ENCODE measurements at regions of chr5 and their contacts with region 1.

Region 1: DNA sequence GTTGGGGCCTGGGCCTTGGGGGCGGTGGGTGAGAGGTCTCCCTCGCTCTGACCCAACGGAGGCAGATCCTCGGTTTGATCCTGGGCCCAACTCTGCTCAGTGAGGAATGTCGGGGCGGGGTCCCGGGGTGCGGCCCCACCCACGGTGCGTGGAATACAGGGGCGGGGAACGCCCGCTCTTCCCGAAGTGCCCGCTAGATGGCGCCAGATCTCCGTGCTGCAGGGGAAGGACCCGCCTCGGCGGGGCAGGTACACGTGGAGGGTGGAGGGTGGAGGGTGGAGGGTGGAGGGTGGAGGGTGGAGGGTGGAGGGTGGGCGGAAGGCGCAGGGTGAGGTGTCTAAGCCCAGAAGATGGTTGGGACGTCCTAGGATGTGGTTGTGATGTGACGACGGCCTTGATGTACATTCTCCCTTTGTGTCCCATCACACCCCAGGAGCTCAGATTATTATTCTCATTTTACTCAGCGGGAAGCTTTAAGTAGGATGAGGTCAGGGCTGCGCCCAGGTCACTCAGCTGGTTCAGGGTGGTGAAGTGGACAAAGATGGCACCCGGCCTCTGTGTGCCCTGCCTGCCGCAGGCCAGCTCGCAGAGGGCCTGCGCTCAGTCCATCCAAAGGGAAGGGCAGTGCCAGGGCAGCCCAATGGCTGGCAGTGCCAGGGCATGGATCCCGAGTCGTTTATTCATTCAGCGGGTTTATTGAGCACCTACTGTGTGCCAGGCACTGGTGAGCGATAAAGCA is 9.4 kb upstream of the RPS14 start:
- DNase-seq: no peak
- ATAC-seq: peak; percentile 95
- H3K4me3 ChIP-seq: peak overlapping the region; percentile 15 to 41
- H3K27ac ChIP-seq: peak overlapping the region; percentile 84
- H3K4me1 ChIP-seq: peaks cover 22% of the 10 kb centered on the region
- H3K27me3 ChIP-seq: no peaks in the 10 kb centered on the region
- CTCF ChIP-seq: no peak; the same call in 1 of the 2 replicates

Region 2: DNA sequence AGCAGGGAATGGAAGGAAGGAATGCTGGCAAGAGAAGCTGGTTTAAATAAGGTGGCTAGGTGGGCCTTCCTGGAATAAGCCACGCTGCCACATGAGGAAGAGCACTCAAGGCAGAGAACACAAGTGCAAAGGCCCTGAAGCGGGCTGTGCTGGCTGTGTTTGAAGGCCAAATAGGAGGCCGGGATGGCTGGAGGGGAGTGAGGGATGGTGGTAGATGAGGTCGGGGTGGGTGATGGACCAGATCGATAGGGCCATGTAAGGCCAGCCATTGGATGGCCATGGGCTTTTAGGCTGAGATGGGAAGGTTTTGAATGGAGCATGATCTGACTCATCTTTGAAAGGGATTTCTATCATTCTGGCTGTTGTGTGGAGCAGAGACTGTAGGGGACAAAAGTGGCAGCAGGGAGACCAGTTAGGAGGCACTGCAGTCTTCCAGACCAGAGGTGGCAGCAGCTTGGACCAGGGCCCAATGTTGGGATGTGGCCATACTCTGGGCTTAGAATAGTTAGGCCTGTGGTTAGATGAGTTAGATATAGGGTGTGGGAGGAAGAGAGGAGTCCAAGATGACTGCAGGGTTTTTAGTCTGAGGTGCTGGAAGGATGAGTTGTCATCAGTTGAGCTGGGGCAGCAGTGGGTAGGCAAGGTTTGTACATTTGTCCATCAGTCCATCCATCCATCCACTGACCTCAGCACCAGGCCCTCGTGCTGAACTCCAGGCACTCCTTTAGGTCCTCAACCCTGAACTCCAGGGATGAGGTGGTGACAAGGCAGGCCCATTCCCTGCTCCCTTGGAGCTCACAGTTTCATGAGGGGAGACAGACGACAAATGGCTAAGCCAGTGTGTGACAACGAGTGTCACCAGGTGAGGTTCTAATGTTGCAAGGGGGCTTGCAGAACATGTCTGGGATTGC is 79.3 kb after region 1 on chr5:
- CTCF ChIA-PET with region 1: interaction called, 10 read pairs
- POLR2A ChIA-PET with region 1: no interaction called
- in situ Hi-C with region 1: no loop called
- intact Hi-C with region 1: loop called (anchors 5 kb)
- DNase-seq: no peak
- ATAC-seq: peak; percentile 52; the same call in 1 of the 2 replicates
- H3K4me3 ChIP-seq: no peak overlapping the region
- H3K27ac ChIP-seq: no peak overlapping the region
- H3K4me1 ChIP-seq: no peaks in the 10 kb centered on the region
- H3K27me3 ChIP-seq: no peaks in the 10 kb centered on the region
- CTCF ChIP-seq: no peak

Region 3: GRCh38 chr5:150560401-150561193 is 101.6 kb after region 1 on chr5:
- CTCF ChIA-PET with region 1: interaction called, 12 read pairs
- POLR2A ChIA-PET with region 1: interaction called, 4 read pairs
- in situ Hi-C with region 1: no loop called
- intact Hi-C with region 1: loop called (anchors 5 kb)
- DNase-seq: peak; percentile 74
- ATAC-seq: peak; percentile 86
- H3K4me3 ChIP-seq: 0 out of 4 replicates have a peak overlapping the region, but pooled peaks of 1 of the 2 experiments have one; percentile 3
- H3K27ac ChIP-seq: peak overlapping the region; percentile 81
- H3K4me1 ChIP-seq: peaks cover 45% of the 10 kb centered on the region
- H3K27me3 ChIP-seq: no peaks in the 10 kb centered on the region
- CTCF ChIP-seq: peak; percentile 87

Region 4: GRCh38 chr5:150585781-150586341 is 126.9 kb after region 1 on chr5:
- CTCF ChIA-PET with region 1: interaction called, 10 read pairs
- POLR2A ChIA-PET with region 1: no interaction called
- in situ Hi-C with region 1: no loop called
- intact Hi-C with region 1: no loop called
- DNase-seq: no peak
- ATAC-seq: 0 out of 2 replicates have a peak, but pooled peaks have one; percentile 7
- H3K4me3 ChIP-seq: no peak overlapping the region
- H3K27ac ChIP-seq: no peak overlapping the region
- H3K4me1 ChIP-seq: no peaks in the 10 kb centered on the region
- H3K27me3 ChIP-seq: no peaks in the 10 kb centered on the region
- CTCF ChIP-seq: no peak

Measured in Panc1 (cell line).